Panc1 (cell line): ENCODE measurements at regions of chr22 and their contacts with region 1.

Region 1: GRCh38 chr22:34841331-34841771 is 224.6 kb upstream of the ISX start:
- DNase-seq: no peak
- ATAC-seq: no peak
- H3K4me3 ChIP-seq: no peak overlapping the region
- H3K27ac ChIP-seq: no peak overlapping the region
- H3K4me1 ChIP-seq: no peaks in the 10 kb centered on the region
- H3K27me3 ChIP-seq: no peaks in the 10 kb centered on the region
- CTCF ChIP-seq: no peak

Region 2: GRCh38 chr22:34851918-34852662 is 10.7 kb after region 1 on chr22:
- CTCF ChIA-PET with region 1: interaction called, 11 read pairs
- POLR2A ChIA-PET with region 1: no interaction called
- in situ Hi-C with region 1: no loop called
- intact Hi-C with region 1: no loop called
- DNase-seq: no peak
- ATAC-seq: no peak
- H3K4me3 ChIP-seq: no peak overlapping the region
- H3K27ac ChIP-seq: no peak overlapping the region
- H3K4me1 ChIP-seq: no peaks in the 10 kb centered on the region
- H3K27me3 ChIP-seq: no peaks in the 10 kb centered on the region
- CTCF ChIP-seq: no peak